Activated T-helper 2 cell treated with anti-CD3 and anti-CD28 coated beads, Interferon-gamma antibody, Interleukin-2, Interleukin-4, amounts not matched to agents 10 μg/mL and 5 μg/mL and 100 μg/mL, durations not matched to agents 14 hours and 24 hours and 36 hours (primary cell): ENCODE measurements at regions of chr1 and their contacts with region 1.

Region 1: GRCh38 chr1:52552505-52553361 is at the start of gene TUT4:
- DNase-seq: peak; percentile 70
- H3K4me3 Mint-ChIP-seq: peak within 1 kb of the TSS; percentile 72
- H3K27ac Mint-ChIP-seq: no peak within 1 kb of the TSS
- H3K4me1 Mint-ChIP-seq: peaks cover 20% of the 10 kb centered on the region
- H3K27me3 Mint-ChIP-seq: peaks cover 2% of the 10 kb centered on the region
- total RNA-seq, gene TUT4: 61.6 and 63.1 TPM in 2 replicates

Region 2: DNA sequence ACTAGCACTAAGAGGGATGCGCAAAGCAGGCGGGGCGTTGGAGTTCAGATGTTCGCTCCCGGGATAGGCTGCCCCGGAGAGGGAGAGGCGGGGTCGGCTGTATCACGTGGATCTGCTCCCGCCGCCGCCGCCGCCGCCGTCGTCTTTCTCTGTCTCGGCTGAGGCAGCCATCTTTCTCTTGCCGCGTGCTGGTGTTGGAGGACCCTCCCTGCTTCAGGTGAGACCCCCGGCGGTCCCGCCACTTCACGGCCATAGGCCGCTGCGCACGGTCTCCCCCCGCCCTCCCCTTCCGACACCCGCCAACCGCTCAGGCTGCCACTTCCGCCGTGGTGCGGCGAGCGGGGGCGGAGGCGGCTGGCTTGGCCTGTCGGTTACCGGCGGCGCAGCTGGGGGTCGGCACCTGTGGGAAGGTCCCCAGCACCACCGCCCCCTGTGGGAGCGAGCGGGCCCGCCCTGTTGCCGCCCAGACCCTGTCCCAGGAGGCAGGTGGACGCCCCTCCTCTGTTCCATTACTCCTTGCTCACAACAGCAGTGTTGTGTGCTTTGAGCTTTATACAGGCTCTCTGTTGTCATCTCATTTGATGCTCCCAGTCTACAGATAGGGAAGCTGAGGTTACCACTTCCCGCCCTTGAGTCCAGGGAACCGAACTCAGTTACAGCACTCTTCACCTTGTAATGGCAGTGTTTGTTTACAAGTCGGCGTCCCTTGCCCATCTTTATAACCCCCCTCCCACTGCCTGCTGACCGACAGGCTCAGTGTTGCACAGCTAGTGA is 496.4 kb before region 1 on chr1 and contains the start of gene BTF3L4:
- intact Hi-C with region 1: loop called (anchors 1 kb)
- DNase-seq: peak; percentile 93
- H3K4me3 Mint-ChIP-seq: peak within 1 kb of the TSS; percentile 100
- H3K27ac Mint-ChIP-seq: peak within 1 kb of the TSS; percentile 100
- H3K4me1 Mint-ChIP-seq: peaks cover 41% of the 10 kb centered on the region
- H3K27me3 Mint-ChIP-seq: no peaks in the 10 kb centered on the region
- total RNA-seq, gene BTF3L4: 40.8 and 43.1 TPM in 2 replicates

Region 3: GRCh38 chr1:52404116-52404986 is 148.4 kb before region 1 on chr1 and contains the starts of genes ORC1 and PRPF38A:
- intact Hi-C with region 1: loop called (anchors 1 kb)
- DNase-seq: peak; percentile 96
- H3K4me3 Mint-ChIP-seq: peak within 1 kb of the TSS; percentile 98
- H3K27ac Mint-ChIP-seq: peak within 1 kb of the TSS; percentile 97
- H3K4me1 Mint-ChIP-seq: peaks cover 42% of the 10 kb centered on the region
- H3K27me3 Mint-ChIP-seq: no peaks in the 10 kb centered on the region
- total RNA-seq, gene ORC1: 36.2 and 38.9 TPM in 2 replicates
- total RNA-seq, gene PRPF38A: 96.6 and 98.1 TPM in 2 replicates

Region 4: GRCh38 chr1:52520148-52520547 is 32.6 kb before region 1 on chr1:
- intact Hi-C with region 1: loop called (anchors 1 kb)
- DNase-seq: no peak
- H3K4me3 Mint-ChIP-seq: no peak overlapping the region
- H3K27ac Mint-ChIP-seq: peak overlapping the region; percentile 38
- H3K4me1 Mint-ChIP-seq: peaks cover 37% of the 10 kb centered on the region
- H3K27me3 Mint-ChIP-seq: no peaks in the 10 kb centered on the region

Region 5: GRCh38 chr1:52636721-52637695 is 84.3 kb after region 1 on chr1:
- intact Hi-C with region 1: loop called (anchors 5 kb)
- DNase-seq: peak; percentile 78
- H3K4me3 Mint-ChIP-seq: peak overlapping the region; percentile 69
- H3K27ac Mint-ChIP-seq: peak overlapping the region; percentile 99
- H3K4me1 Mint-ChIP-seq: peaks cover 51% of the 10 kb centered on the region
- H3K27me3 Mint-ChIP-seq: peaks cover 7% of the 10 kb centered on the region